ENCODE measurements at regions of chr11 and their contacts with region 1.

Region 1: GRCh38 chr11:8604078-8604723 is 10.2 kb upstream of the STK33 start:
- DNase-seq: no peak
- H3K4me3 Mint-ChIP-seq: no peak overlapping the region
- H3K27ac Mint-ChIP-seq: no peak overlapping the region
- H3K4me1 Mint-ChIP-seq: no peaks in the 10 kb centered on the region
- H3K27me3 Mint-ChIP-seq: peaks cover 14% of the 10 kb centered on the region

Region 2: DNA sequence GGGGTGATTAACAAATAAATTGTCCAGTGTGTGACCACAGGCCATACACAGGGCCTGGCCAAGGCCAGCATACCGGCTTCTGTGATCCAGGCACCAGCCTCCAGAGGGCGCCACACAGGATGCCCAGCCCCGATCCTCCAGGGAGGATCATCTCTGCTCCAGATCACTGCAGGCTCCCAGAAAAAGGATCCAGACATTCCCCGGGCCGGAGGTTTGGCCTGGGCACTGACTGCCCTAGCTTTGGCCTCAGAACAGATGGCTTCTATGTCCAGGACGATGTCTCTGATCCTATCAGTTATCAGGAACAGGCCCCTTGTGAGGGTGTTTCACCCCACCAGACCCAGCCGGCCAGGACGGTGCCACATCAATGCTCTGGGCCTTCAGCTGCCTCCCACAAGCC is 266.1 kb before region 1 on chr11:
- intact Hi-C with region 1: loop called (anchors 1 kb)
- DNase-seq: peak; percentile 7
- H3K4me3 Mint-ChIP-seq: no peak overlapping the region
- H3K27ac Mint-ChIP-seq: no peak overlapping the region
- H3K4me1 Mint-ChIP-seq: peaks cover 6% of the 10 kb centered on the region
- H3K27me3 Mint-ChIP-seq: peaks cover 2% of the 10 kb centered on the region